Uterus (tissue), 4 donors: ENCODE measurements at regions of chr5 and their contacts with region 1.

Region 1: GRCh38 chr5:177500685-177501522 is 3.5 kb upstream of the PDLIM7 start:
- DNase-seq: peak; percentile 91 to 92
- H3K4me3 ChIP-seq: no peak overlapping the region
- H3K27ac ChIP-seq: peak overlapping the region in 1 of 2 donors; percentile 22
- H3K4me1 ChIP-seq: peaks cover 0 to 7% of the 10 kb centered on the region in 2 donors
- H3K27me3 ChIP-seq: no peaks in the 10 kb centered on the region
- CTCF ChIP-seq: peak; percentile 93 to 96 (median 95)
- POLR2A ChIP-seq: no peak

Region 2: GRCh38 chr5:177176175-177176711 is 324.7 kb before region 1 on chr5:
- intact Hi-C with region 1: no loop called
- DNase-seq: no peak
- H3K4me3 ChIP-seq: no peak overlapping the region
- H3K27ac ChIP-seq: no peak overlapping the region
- H3K4me1 ChIP-seq: no peaks in the 10 kb centered on the region
- H3K27me3 ChIP-seq: no peaks in the 10 kb centered on the region
- CTCF ChIP-seq: no peak
- POLR2A ChIP-seq: no peak

Region 3: DNA sequence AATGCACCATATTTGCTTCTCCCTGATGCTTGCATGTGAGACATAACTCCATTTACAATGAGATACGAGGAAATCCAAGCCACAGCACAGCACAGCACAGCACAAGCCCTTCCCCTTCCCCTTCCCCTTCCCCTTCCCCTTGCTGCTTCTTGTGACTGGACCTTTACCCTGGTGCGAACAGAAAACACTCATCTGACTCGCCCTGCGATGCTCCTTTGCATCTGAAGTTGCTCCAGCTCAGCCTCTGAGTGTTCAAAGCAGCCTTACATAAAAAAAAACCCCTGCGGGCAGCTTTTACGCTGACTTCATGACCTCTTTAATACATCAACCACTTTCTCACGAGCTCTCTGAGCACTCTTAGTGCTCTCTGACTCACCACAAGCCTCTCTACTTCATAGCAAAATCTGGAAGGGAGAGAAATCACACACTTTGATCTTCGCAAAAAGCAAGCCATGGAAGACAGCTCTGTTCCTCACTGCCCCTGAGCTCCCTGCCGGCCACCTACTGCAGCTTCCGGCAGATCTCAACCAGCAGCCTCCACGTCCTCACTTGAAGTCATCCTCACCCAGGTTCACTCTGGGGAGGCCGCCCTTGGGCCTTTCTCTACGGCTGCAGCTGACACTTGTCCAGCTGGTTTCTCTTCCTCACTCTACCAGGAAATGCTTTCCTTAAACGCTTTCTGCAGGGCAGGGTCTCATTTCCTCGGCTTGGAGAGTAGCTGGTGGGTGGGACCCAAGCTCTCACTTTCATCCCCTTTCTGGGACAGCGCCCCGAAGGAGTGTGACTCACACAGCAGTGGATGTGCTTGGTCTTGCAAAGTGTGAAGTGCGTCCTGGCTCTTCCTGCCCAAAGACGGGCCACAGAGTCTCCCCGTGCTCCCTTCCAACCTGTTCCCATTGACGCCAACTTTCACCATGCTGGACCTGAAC is 111.4 kb before region 1 on chr5:
- intact Hi-C with region 1: loop called (anchors 5 kb)
- DNase-seq: no peak
- H3K4me3 ChIP-seq: no peak overlapping the region
- H3K27ac ChIP-seq: no peak overlapping the region
- H3K4me1 ChIP-seq: no peaks in the 10 kb centered on the region
- H3K27me3 ChIP-seq: no peaks in the 10 kb centered on the region
- CTCF ChIP-seq: no peak
- POLR2A ChIP-seq: no peak

Region 4: DNA sequence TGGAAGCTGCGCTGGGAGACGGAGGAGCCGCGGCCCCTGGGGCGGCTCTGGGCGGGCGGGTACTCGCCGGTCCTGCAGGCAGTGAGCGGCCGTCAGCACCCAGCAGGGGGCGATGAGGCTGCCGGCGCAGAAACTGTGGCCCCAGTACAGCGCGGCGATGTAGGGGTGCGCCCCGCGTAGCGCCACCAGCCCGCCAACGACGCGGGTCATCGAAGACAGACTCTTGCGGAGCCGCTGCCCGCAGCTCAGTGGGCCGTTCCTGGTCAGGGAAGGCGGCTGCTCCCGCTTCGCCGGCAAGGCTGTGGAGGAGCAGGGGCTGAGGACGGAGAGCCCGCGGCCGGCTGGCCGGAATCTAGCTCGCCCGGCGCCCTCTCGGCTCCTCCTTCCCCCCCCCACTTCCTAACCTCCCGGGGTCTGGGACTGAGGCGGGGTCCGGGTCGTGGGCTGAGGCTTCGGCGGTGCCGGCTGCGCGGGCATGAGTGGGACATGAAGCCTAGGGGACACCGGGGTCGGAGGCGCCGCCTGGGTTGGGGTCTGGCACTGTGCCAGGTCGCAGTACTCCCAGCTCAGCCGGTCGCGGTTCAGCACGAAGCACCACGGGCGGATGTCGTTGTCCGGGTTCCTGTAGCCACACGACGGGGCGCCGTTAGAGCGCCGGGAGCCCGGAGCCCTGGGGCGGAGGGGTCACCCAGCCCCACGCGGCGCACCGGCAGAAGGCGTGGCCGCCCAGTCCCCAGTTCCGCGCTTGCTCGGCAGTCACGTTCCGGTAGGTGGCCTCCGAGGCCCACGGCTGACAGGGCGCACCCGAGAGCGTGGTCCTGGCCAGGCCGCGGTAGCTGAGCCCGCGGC is 96.9 kb before region 1 on chr5:
- intact Hi-C with region 1: loop called (anchors 5 kb)
- DNase-seq: peak; percentile 80 to 84
- H3K4me3 ChIP-seq: peak overlapping the region; percentile 33 to 38
- H3K27ac ChIP-seq: no peak overlapping the region
- H3K4me1 ChIP-seq: peaks cover 0 to 25% of the 10 kb centered on the region in 2 donors
- H3K27me3 ChIP-seq: peaks cover 36 to 39% of the 10 kb centered on the region in 2 donors
- CTCF ChIP-seq: peak; percentile 64 to 84 (median 79)
- POLR2A ChIP-seq: peak in 1 of 2 donors; percentile 15